Breast epithelium (tissue), 4 donors: ENCODE measurements at regions of chr4 and their contacts with region 1.

Region 1: GRCh38 chr4:121126449-121127006 is 37.6 kb downstream of the TNIP3 start:
- DNase-seq: no peak
- H3K4me3 ChIP-seq: no peak overlapping the region
- H3K27ac ChIP-seq: no peak overlapping the region
- H3K4me1 ChIP-seq: no peaks in the 10 kb centered on the region
- H3K27me3 ChIP-seq: no peaks in the 10 kb centered on the region
- CTCF ChIP-seq: no peak
- POLR2A ChIP-seq: no peak

Region 2: GRCh38 chr4:121800961-121801714 is 674.6 kb after region 1 on chr4 and contains the start of gene EXOSC9:
- intact Hi-C with region 1: loop called (anchors 5 kb)
- DNase-seq: peak; percentile 83 to 92
- H3K4me3 ChIP-seq: peak within 1 kb of the TSS; percentile 76 to 95 (median 87)
- H3K27ac ChIP-seq: peak within 1 kb of the TSS; percentile 85 to 91
- H3K4me1 ChIP-seq: no peaks in the 10 kb centered on the region
- H3K27me3 ChIP-seq: no peaks in the 10 kb centered on the region
- CTCF ChIP-seq: no peak
- POLR2A ChIP-seq: peak; percentile 49
- total RNA-seq, gene EXOSC9: 23.4 to 27.2 (median 25.2) TPM